GM10248 (cell line): ENCODE measurements at regions of chr12 and their contacts with region 1.

Region 1: GRCh38 chr12:110449799-110450497 is at the start of gene ARPC3:
- DNase-seq: peak; percentile 93
- CTCF ChIP-seq: peak; percentile 99

Region 2: GRCh38 chr12:110431957-110432587 is 17.9 kb before region 1 on chr12:
- CTCF ChIA-PET with region 1: interaction called, 30 read pairs
- POLR2A ChIA-PET with region 1: interaction called, 5 read pairs
- DNase-seq: no peak
- CTCF ChIP-seq: no peak

Region 3: GRCh38 chr12:110501752-110502738 is 52.1 kb after region 1 on chr12 and contains the starts of genes RAD9B and VPS29:
- CTCF ChIA-PET with region 1: interaction called, 11 read pairs
- POLR2A ChIA-PET with region 1: no interaction called
- DNase-seq: peak; percentile 94
- CTCF ChIP-seq: no peak

Region 4: GRCh38 chr12:110590806-110591326 is 140.9 kb after region 1 on chr12:
- CTCF ChIA-PET with region 1: interaction called, 11 read pairs
- POLR2A ChIA-PET with region 1: no interaction called
- DNase-seq: peak; percentile 72
- CTCF ChIP-seq: no peak

Region 5: DNA sequence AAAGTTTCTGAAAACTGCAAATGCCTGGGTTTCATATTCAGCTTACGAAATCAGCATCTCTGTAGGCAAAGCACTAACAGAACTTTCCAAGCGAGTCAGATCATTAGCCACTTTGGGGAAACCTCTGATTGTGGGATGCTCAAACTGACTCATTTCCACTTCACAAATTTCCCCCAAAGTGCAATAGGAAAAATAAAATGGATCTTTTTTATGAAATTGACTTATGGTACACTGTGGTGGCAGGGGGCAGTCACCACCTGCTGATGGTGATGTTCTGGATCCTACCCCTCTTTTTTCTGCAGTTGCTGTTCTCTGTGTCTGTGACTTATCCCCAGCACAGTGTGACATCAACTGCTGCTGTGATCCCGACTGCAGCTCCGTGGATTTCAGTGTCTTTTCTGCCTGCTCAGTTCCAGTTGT is 169.6 kb after region 1 on chr12:
- CTCF ChIA-PET with region 1: interaction called, 10 read pairs
- POLR2A ChIA-PET with region 1: no interaction called
- DNase-seq: peak; percentile 54
- CTCF ChIP-seq: peak; percentile 29

Region 6: DNA sequence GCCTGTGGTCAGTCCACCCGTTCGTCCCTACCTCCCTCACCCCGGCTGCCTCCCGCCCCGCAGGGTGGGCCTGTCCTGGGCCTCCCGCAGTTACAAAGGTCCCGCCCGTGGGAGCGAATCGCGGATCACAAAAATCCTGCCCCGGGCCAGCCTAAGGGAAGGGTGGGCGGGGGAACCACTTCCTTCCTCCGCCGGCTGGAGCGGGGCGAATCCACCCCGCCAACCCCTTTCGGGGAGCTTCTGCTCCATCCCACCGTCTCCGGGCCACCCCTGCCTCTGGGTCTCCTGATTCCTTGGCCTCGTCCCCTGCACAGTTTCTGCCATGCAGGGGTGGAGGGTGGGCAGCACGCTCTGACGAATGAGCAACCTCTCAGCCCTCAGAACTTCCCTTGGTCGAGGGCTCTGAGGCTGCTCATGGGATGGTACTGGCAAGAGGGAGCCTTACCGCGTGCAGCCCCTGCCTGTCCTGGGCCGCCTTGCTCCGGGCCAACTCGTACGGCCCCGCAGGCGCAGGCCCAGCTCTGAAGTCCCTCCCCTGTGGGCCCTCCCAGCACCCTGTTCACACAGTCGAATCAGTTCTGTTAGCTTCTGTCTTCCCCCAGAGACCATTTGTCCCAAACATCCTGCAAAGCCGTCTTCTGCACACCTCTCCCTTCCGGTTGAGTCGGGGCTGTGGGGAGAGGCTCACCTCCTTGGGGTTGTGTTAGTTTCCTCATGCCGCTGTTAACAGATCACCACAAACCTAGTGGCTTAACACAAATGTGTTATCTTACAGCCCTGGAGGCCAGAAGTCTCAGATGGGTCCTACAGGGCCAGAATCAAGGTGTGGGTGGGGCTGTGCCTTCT is 239.6 kb after region 1 on chr12:
- CTCF ChIA-PET with region 1: no interaction called
- POLR2A ChIA-PET with region 1: no interaction called
- DNase-seq: peak; percentile 80
- CTCF ChIP-seq: no peak